Mammary epithelial cell (primary cell): ENCODE measurements at regions of chr3 and their contacts with region 1.

Region 1: DNA sequence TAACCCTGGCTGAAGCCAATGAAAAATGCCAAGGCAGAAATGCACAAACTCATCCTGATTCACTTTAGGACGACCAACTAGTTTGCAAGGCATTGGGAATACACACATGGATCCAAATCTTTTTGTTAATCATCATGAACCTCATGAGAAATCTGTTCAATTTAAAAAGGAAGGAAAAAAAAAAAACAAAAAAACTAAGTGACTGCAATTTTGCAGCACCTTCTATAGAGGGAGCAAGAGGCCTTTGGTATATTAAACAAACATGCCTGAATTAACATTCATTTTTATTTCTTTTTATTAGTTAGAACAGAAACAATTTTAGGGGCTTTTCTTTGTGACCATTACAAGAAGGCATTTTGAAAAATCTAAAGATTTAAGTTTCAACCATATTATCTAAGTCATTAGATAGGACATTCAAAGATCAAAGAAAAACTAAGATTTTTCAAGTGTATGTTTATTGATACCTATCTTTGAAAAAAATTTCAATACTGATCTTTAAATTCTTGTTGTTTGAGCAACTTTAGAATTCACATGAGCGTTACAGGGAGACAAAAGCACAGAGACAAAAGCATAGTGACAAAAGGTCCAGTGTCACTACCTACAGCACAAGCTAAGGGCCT is 182.4 kb downstream of the CBLB start:
- DNase-seq: no peak
- H3K4me3 ChIP-seq: no peak overlapping the region
- H3K27ac ChIP-seq: no peak overlapping the region
- H3K4me1 ChIP-seq: no peaks in the 10 kb centered on the region
- H3K27me3 ChIP-seq: no peaks in the 10 kb centered on the region
- CTCF ChIP-seq: peak; percentile 76 to 82

Region 2: GRCh38 chr3:106119614-106120082 is 433.3 kb after region 1 on chr3:
- CTCF ChIA-PET with region 1: no interaction called
- dilution Hi-C with region 1: no loop called
- in situ Hi-C with region 1: no loop called
- intact Hi-C with region 1: loop called (anchors 5 kb)
- DNase-seq: peak; percentile 11
- H3K4me3 ChIP-seq: no peak overlapping the region
- H3K27ac ChIP-seq: no peak overlapping the region
- H3K4me1 ChIP-seq: peaks cover 16% of the 10 kb centered on the region
- H3K27me3 ChIP-seq: no peaks in the 10 kb centered on the region
- CTCF ChIP-seq: no peak

Region 3: GRCh38 chr3:106206146-106206545 is 519.8 kb after region 1 on chr3:
- CTCF ChIA-PET with region 1: no interaction called
- dilution Hi-C with region 1: no loop called
- in situ Hi-C with region 1: no loop called
- intact Hi-C with region 1: loop called (anchors 1 kb)
- DNase-seq: no peak
- H3K4me3 ChIP-seq: no peak overlapping the region
- H3K27ac ChIP-seq: no peak overlapping the region
- H3K4me1 ChIP-seq: no peaks in the 10 kb centered on the region
- H3K27me3 ChIP-seq: no peaks in the 10 kb centered on the region
- CTCF ChIP-seq: no peak